ENCODE measurements at regions of chr1 and their contacts with region 1.

Region 1: DNA sequence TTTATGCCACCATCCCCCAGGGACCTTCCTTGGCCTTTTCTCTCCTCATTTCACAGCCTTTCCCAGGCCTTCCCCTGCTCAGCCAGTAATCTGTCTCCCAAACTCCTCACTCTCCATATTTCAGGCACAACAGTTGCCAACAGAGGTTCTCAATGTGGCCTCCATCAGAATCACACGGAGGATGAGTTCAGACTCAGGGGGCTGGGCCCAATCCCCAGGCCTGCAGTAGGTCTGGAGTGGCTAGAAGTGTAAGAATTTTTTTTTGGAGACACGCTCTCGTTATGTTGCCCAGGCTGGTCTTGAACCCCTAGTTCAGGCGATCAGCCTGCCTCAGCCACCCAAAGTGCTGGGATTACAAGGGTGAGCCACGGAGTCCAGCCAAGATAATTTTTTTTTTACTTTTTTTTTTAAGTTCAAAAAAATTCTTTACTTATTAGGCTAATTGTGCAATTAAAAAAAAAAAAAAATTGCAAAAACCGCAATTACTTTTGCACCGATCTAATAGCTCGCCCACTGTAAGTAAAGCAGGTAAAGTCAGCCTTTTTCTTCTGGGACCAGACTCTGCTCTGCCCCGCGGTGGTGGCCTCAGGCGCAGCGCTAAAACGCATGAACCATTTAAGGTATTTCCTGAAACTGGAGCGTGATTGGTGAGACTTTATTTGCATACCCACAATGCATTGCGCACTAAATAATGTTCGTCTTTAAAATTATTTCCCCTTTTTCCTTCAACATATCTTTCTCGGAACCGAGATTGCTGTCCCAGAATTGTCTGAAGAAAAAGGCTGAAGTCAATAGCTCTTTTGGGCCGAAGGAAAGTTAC is 18.7 kb downstream of the KIAA2013 start:
- DNase-seq: peak; percentile 92
- ATAC-seq: peak; percentile 63
- H3K4me3 ChIP-seq: no peak overlapping the region
- H3K27ac ChIP-seq: peak overlapping the region; percentile 62
- H3K4me1 ChIP-seq: peaks cover 5 to 32% of the 10 kb centered on the region in 2 experiments; a peak in 3 of 4 replicates
- H3K27me3 ChIP-seq: no peaks in the 10 kb centered on the region
- CTCF ChIP-seq: peak in 2 of 3 experiments; percentile 73 to 78; a peak in 4 of 6 replicates
- POLR2A ChIP-seq: no peak
- RAD21 ChIP-seq: no peak

Region 2: GRCh38 chr1:11862890-11863289 is 44.6 kb before region 1 on chr1:
- CTCF ChIA-PET with region 1: no interaction called
- POLR2A ChIA-PET with region 1: interaction called, 13 read pairs
- RAD21 ChIA-PET with region 1: no interaction called
- intact Hi-C with region 1: no loop called
- DNase-seq: no peak
- ATAC-seq: peak; percentile 26; the same call in 1 of the 2 replicates
- H3K4me3 ChIP-seq: no peak overlapping the region
- H3K27ac ChIP-seq: no peak overlapping the region
- H3K4me1 ChIP-seq: peaks cover 4 to 10% of the 10 kb centered on the region in 2 experiments; a peak in 3 of 4 replicates
- H3K27me3 ChIP-seq: peaks cover 41% of the 10 kb centered on the region
- CTCF ChIP-seq: no peak
- POLR2A ChIP-seq: no peak
- RAD21 ChIP-seq: no peak

Region 3: GRCh38 chr1:11925938-11926292 is 18.4 kb after region 1 on chr1:
- CTCF ChIA-PET with region 1: no interaction called
- POLR2A ChIA-PET with region 1: interaction called, 162 read pairs
- RAD21 ChIA-PET with region 1: no interaction called
- intact Hi-C with region 1: loop called (anchors 1 kb)
- DNase-seq: no peak
- ATAC-seq: peak; percentile 23
- H3K4me3 ChIP-seq: peak overlapping the region; percentile 52 to 55
- H3K27ac ChIP-seq: peak overlapping the region; percentile 79; the same call in 1 of the 2 replicates
- H3K4me1 ChIP-seq: peaks cover 36 to 50% of the 10 kb centered on the region in 2 experiments
- H3K27me3 ChIP-seq: no peaks in the 10 kb centered on the region
- CTCF ChIP-seq: no peak
- POLR2A ChIP-seq: no peak
- RAD21 ChIP-seq: no peak

Region 4: GRCh38 chr1:11948822-11949458 is 41.5 kb after region 1 on chr1:
- CTCF ChIA-PET with region 1: no interaction called
- POLR2A ChIA-PET with region 1: interaction called, 17 read pairs
- RAD21 ChIA-PET with region 1: no interaction called
- intact Hi-C with region 1: no loop called
- DNase-seq: no peak
- ATAC-seq: peak; percentile 67
- H3K4me3 ChIP-seq: no peak overlapping the region
- H3K27ac ChIP-seq: no peak overlapping the region
- H3K4me1 ChIP-seq: peaks cover 5 to 19% of the 10 kb centered on the region in 2 experiments; a peak in 2 of 4 replicates
- H3K27me3 ChIP-seq: no peaks in the 10 kb centered on the region
- CTCF ChIP-seq: no peak
- POLR2A ChIP-seq: no peak
- RAD21 ChIP-seq: no peak

Region 5: GRCh38 chr1:12019858-12020509 is 112.5 kb after region 1 on chr1:
- CTCF ChIA-PET with region 1: interaction called, 3 read pairs
- POLR2A ChIA-PET with region 1: interaction called, 70 read pairs
- RAD21 ChIA-PET with region 1: no interaction called
- intact Hi-C with region 1: no loop called
- DNase-seq: no peak
- ATAC-seq: peak; percentile 19
- H3K4me3 ChIP-seq: peak overlapping the region; percentile 91 to 95
- H3K27ac ChIP-seq: peak overlapping the region; percentile 73
- H3K4me1 ChIP-seq: peaks cover 0 to 17% of the 10 kb centered on the region in 2 experiments; a peak in 2 of 4 replicates
- H3K27me3 ChIP-seq: no peaks in the 10 kb centered on the region
- CTCF ChIP-seq: no peak
- POLR2A ChIP-seq: no peak
- RAD21 ChIP-seq: no peak

Region 6: DNA sequence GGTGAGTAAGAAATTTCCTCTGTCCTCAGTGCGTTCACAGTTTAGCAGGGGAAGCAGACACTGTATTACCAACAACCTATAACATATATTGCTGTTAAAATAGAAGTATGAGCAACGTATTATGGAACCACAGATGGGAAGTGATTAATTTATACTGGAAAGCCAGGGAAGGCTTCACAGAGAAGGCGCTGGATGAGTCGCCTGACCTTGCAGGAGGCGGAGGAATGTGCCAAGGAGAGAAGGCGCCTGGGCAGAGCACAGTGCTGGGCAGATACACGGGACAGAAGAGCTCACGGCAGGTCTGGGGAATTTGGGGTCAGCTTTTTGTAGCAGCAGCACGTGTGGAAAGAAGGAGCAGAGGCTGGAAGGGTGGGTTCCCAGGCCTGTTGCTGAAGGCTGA is 594.2 kb after region 1 on chr1:
- CTCF ChIA-PET with region 1: no interaction called
- POLR2A ChIA-PET with region 1: no interaction called
- RAD21 ChIA-PET with region 1: no interaction called
- intact Hi-C with region 1: no loop called
- DNase-seq: no peak
- ATAC-seq: peak; percentile 95
- H3K4me3 ChIP-seq: peak overlapping the region in 1 of 2 experiments; percentile 22; a peak in 2 of 4 replicates
- H3K27ac ChIP-seq: peak overlapping the region; percentile 17; the same call in 1 of the 2 replicates
- H3K4me1 ChIP-seq: peaks cover 11 to 28% of the 10 kb centered on the region in 2 experiments
- H3K27me3 ChIP-seq: no peaks in the 10 kb centered on the region
- CTCF ChIP-seq: no peak
- POLR2A ChIP-seq: no peak
- RAD21 ChIP-seq: no peak